ENCODE measurements at regions of chr3 and their contacts with region 1.

Region 1: DNA sequence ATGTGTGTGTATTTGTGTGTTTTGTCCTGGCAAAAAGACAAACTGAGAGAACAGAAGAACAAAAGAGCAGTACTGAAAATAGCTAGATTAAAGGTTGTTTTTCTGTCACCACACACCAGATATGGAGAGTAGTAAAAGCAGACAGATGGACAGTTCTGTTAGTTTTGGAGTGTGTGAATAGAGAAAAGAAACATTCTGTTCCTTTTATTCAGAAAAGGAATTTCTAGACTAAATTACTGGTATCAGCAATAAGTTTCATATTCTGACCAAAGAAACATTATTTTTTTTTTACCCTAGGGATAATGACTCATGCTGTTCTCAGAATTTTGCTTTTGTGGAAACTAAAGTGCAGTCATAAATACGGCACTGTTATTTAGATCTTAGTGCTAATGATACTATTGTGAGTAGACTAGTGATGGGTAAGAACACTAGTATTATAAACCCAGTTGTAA is 32.9 kb downstream of the PIK3CA start:
- DNase-seq: no peak
- H3K4me3 Mint-ChIP-seq: no peak overlapping the region
- H3K27ac Mint-ChIP-seq: no peak overlapping the region
- H3K4me1 Mint-ChIP-seq: peaks cover 11% of the 10 kb centered on the region
- H3K27me3 Mint-ChIP-seq: no peaks in the 10 kb centered on the region

Region 2: DNA sequence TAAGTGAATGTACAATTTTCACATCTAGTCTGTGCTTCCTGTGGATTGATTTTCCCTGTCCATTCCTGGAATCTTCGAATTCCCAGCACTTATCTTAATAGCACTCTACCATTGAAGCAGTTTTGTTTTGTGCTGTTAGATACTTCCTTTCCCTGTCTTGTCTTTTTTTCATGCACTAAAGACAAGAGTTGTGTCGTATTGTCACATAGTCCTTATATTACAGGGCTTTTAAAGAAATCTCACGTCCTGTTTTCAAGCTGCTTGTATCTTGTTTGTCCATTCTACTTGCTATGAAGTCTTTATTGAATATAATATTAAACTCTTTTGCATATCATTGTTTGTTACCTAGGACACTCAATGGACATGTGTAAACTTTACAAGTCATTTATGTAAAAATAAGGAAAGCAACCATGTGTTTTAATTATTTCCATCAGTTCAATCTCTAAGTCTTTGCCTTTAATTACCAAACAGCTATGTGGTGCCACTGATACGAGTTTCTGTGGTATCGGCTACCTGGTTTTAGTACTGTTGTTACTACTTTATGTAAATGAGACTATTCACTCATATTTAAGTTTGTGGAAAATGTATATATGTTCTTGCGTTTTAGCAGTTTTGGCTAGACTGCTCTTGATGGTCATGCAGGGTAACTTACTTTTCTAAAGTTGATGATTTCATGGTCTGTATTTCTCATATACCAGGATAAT is 22.6 kb before region 1 on chr3:
- intact Hi-C with region 1: loop called (anchors 2 kb)
- DNase-seq: no peak
- H3K4me3 Mint-ChIP-seq: no peak overlapping the region
- H3K27ac Mint-ChIP-seq: no peak overlapping the region
- H3K4me1 Mint-ChIP-seq: peaks cover 6% of the 10 kb centered on the region
- H3K27me3 Mint-ChIP-seq: no peaks in the 10 kb centered on the region

Region 3: GRCh38 chr3:179196098-179196497 is 15.1 kb after region 1 on chr3:
- intact Hi-C with region 1: loop called (anchors 1 kb)
- DNase-seq: peak; percentile 80
- H3K4me3 Mint-ChIP-seq: peak overlapping the region; percentile 35
- H3K27ac Mint-ChIP-seq: no peak overlapping the region
- H3K4me1 Mint-ChIP-seq: peaks cover 25% of the 10 kb centered on the region
- H3K27me3 Mint-ChIP-seq: no peaks in the 10 kb centered on the region

Region 4: GRCh38 chr3:179653096-179653797 is 472.2 kb after region 1 on chr3:
- intact Hi-C with region 1: no loop called
- DNase-seq: peak; percentile 89
- H3K4me3 Mint-ChIP-seq: peak overlapping the region; percentile 93
- H3K27ac Mint-ChIP-seq: peak overlapping the region; percentile 92
- H3K4me1 Mint-ChIP-seq: peaks cover 17% of the 10 kb centered on the region
- H3K27me3 Mint-ChIP-seq: peaks cover 15% of the 10 kb centered on the region